MCF 10A (cell line): ENCODE measurements at regions of chr20 and their contacts with region 1.

Region 1: GRCh38 chr20:38057351-38057972 is 23.9 kb downstream of the RPRD1B start:
- DNase-seq: peak; percentile 88
- H3K4me3 Mint-ChIP-seq: no peak overlapping the region
- H3K27ac Mint-ChIP-seq: no peak overlapping the region
- H3K4me1 Mint-ChIP-seq: peaks cover 11% of the 10 kb centered on the region
- H3K27me3 Mint-ChIP-seq: no peaks in the 10 kb centered on the region
- CTCF ChIP-seq: peak; percentile 87

Region 2: DNA sequence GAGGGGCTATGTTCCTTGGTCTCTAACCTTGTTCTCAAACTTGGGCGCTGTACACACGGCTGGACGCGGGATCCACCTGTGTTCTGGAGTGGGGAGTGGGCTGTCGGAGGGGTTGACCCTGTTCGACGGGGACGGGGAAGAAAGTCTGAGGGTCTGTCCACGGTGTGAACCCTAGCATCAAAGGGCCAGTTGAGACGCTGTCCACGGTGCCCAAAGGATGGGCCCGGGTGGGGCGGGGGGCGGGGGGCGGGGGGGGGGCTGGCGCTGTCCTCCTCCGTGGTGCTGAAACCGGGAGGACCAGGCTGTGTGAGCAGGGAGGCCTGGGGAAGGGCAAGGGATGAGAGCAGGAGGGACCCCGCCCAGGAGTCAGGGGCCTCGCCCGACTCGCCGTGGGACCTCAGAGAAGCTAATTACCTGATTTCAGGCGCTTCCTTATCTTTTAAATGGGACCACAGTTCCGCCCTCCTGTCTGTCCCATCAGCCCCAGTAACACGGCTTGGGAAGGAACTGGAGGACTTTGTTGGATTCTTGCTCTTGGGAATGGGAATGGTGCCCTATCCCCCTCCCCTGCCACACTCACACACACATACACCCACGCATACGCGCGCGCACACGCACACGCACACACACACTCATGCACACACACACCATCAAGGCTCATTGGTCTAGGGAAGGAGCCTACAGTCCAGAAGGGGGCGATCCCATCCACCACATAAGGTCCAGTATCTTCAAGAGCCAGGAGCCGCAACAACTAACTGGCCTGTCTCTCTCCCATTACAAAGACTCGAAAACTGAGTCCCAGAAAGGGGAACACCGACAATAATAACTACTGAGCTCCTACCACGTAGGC is 155.6 kb before region 1 on chr20:
- CTCF ChIA-PET with region 1: interaction called, 3 read pairs
- POLR2A ChIA-PET with region 1: no interaction called
- intact Hi-C with region 1: loop called (anchors 2 kb)
- DNase-seq: peak; percentile 81
- H3K4me3 Mint-ChIP-seq: peak overlapping the region; percentile 86
- H3K27ac Mint-ChIP-seq: no peak overlapping the region
- H3K4me1 Mint-ChIP-seq: peaks cover 33% of the 10 kb centered on the region
- H3K27me3 Mint-ChIP-seq: no peaks in the 10 kb centered on the region
- CTCF ChIP-seq: peak; percentile 45

Region 3: GRCh38 chr20:38043512-38044300 is 13.8 kb before region 1 on chr20:
- CTCF ChIA-PET with region 1: interaction called, 39 read pairs
- POLR2A ChIA-PET with region 1: interaction called, 7 read pairs
- intact Hi-C with region 1: no loop called
- DNase-seq: peak; percentile 85
- H3K4me3 Mint-ChIP-seq: no peak overlapping the region
- H3K27ac Mint-ChIP-seq: peak overlapping the region; percentile 88
- H3K4me1 Mint-ChIP-seq: peaks cover 19% of the 10 kb centered on the region
- H3K27me3 Mint-ChIP-seq: no peaks in the 10 kb centered on the region
- CTCF ChIP-seq: no peak

Region 4: GRCh38 chr20:38094373-38094891 is 37.0 kb after region 1 on chr20:
- CTCF ChIA-PET with region 1: interaction called, 10 read pairs
- POLR2A ChIA-PET with region 1: no interaction called
- intact Hi-C with region 1: no loop called
- DNase-seq: peak; percentile 73
- H3K4me3 Mint-ChIP-seq: no peak overlapping the region
- H3K27ac Mint-ChIP-seq: peak overlapping the region; percentile 52
- H3K4me1 Mint-ChIP-seq: peaks cover 12% of the 10 kb centered on the region
- H3K27me3 Mint-ChIP-seq: no peaks in the 10 kb centered on the region
- CTCF ChIP-seq: no peak

Region 5: DNA sequence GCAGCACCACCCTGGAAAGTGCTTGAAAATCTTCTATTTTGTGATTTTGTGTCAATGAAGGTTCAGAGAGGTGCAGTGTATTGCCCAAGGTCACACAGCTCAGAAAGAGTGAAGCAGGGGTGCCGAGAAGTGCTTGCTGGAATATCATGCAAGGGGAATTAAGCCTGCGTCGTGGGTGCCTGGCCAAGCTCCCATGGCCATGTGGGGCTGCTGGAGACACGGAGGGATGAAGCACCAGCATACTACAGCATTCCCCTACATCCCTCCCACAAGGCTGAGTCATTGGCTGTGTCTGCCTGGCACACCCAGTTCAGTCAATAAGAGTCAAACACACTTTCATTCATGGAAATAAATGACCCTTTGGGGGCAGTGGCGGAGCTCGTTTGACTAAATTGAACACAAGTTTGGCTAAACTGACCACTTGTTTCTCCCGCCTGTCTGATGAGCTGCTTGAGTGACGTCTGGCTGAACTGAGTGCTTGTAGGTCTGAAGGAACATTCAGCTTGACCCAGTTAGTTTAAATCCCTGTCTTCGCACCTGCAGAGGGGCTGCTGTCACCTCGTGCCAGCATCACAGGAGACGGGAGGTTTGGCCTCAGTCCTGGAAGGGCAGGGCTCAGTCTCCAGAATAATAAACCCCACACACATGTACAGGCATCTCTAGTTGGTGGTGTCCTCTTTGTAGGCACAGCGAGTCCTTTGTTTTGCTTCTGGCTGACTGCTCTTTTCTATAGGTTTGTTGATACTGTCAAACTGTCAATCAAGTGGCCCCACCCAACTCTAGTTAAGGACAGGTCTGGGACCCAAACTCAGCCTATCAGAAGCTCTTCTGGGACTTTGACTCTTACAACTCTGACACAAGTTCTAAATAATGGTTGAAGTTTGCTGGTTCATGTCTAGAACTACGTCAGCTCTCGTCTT is 116.0 kb after region 1 on chr20:
- CTCF ChIA-PET with region 1: interaction called, 12 read pairs
- POLR2A ChIA-PET with region 1: no interaction called
- intact Hi-C with region 1: loop called (anchors 2 kb)
- DNase-seq: peak; percentile 84
- H3K4me3 Mint-ChIP-seq: no peak overlapping the region
- H3K27ac Mint-ChIP-seq: peak overlapping the region; percentile 2
- H3K4me1 Mint-ChIP-seq: peaks cover 36% of the 10 kb centered on the region
- H3K27me3 Mint-ChIP-seq: no peaks in the 10 kb centered on the region
- CTCF ChIP-seq: no peak

Region 6: DNA sequence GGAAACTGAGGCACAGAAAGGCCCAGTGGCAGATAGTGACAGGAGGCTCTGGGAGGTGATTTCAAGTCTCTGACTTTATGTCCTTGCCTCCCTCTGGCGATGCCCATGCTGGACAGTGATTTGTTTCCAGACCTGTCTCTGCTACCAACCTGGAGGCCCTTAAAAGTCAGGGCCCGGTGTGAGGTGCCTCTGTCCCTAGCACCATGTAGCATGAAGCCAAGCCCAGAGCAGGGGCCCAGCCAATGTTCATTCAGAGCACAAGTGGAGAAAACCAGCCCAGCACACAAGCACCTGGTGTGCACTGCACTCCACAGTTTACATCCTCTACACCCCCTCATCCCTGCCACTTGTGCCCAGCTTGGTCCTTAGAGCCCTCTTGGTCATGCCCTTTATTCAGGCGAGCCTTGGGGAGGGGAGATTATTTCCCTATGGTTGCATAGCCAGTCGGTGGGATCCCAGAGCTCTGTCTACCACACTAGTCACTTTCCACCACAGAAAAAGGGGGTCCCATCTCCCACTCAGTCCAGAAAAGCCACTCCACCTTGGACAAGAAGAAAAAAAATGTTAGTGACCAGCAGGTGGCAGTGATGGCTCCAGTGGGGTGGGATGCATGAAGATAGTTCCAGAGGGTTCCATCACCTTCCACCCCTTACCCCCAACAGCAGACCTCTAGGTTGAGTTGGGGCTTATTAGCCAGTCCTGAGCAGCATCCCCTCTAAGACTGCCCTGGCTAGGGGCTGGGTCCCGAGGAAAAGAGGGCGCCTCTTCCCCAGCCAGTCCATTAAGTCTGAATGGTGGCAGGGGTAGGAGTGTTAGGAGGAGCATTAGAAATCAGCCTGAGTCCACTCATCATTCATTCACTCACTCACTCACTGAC is 172.2 kb after region 1 on chr20:
- CTCF ChIA-PET with region 1: interaction called, 782 read pairs
- POLR2A ChIA-PET with region 1: no interaction called
- intact Hi-C with region 1: no loop called
- DNase-seq: peak; percentile 57
- H3K4me3 Mint-ChIP-seq: no peak overlapping the region
- H3K27ac Mint-ChIP-seq: no peak overlapping the region
- H3K4me1 Mint-ChIP-seq: no peaks in the 10 kb centered on the region
- H3K27me3 Mint-ChIP-seq: no peaks in the 10 kb centered on the region
- CTCF ChIP-seq: peak; percentile 59

Region 7: GRCh38 chr20:38412877-38413577 is 355.6 kb after region 1 on chr20:
- CTCF ChIA-PET with region 1: interaction called, 7 read pairs
- POLR2A ChIA-PET with region 1: no interaction called
- intact Hi-C with region 1: loop called (anchors 1 kb)
- DNase-seq: no peak
- H3K4me3 Mint-ChIP-seq: no peak overlapping the region
- H3K27ac Mint-ChIP-seq: no peak overlapping the region
- H3K4me1 Mint-ChIP-seq: no peaks in the 10 kb centered on the region
- H3K27me3 Mint-ChIP-seq: no peaks in the 10 kb centered on the region
- CTCF ChIP-seq: no peak